Mammary epithelial cell (primary cell): ENCODE measurements at regions of chr16 and their contacts with region 1.

Region 1: DNA sequence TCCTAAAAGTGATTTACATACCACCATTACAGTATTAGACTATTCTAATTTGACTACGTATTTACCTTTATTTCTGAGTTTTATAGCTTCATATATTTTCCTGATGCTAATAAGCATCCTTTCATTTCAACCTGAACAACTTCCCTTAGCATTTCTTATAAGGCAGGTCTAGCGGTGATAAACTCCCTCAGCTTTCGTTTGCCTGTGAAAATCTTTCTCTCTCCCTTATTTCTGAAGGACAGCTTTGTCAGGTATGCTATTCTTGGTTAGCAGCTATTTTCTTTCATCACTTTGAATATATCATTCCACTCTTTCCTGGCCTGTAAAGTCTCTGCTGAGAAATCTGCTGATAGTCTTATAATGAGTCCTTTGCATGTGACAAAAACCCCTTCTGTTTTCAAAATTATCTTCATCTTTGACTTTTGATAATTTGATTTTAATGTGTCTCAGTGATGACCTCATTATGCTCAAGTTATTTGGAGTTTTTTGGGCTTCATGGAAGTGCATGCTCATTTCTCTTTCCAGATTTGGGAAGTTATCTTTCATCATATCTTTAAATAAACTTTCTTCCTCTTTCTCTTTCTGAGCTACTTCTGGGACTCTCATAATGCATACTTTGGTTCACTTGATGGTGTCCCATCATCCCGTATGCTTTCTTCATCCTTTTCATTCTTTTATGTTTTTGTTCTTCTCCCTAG is 285.4 kb upstream of the PMFBP1 start:
- DNase-seq: no peak
- H3K4me3 ChIP-seq: no peak overlapping the region
- H3K27ac ChIP-seq: no peak overlapping the region
- H3K4me1 ChIP-seq: no peaks in the 10 kb centered on the region
- H3K27me3 ChIP-seq: no peaks in the 10 kb centered on the region
- CTCF ChIP-seq: no peak

Region 2: DNA sequence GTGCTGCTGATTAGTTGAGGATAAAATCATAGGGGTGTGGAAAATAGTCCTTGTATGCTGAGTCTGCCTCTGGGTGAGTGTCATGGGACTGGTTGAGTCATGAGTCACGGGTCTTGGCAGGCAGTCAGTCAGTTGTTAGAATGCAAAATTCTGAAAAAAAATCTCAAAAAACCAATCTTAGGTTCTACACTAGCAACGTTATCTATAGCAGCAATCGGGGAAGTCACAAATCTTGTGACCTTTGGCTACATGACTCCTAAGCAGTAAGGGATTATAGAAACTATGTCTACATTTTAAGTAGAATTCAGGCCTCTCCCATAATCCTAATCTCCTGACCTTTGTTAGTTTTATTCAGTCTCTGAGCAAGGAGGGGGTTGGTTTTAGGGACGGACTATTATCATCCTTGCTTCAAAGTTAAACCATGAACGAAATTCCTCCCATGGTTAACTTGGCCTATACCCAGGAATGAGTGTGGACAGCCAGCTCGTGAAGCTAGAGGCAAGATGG is 267.5 kb before region 1 on chr16:
- CTCF ChIA-PET with region 1: interaction called, 16 read pairs
- dilution Hi-C with region 1: no loop called
- in situ Hi-C with region 1: no loop called
- intact Hi-C with region 1: no loop called
- DNase-seq: peak; percentile 57
- H3K4me3 ChIP-seq: no peak overlapping the region
- H3K27ac ChIP-seq: no peak overlapping the region
- H3K4me1 ChIP-seq: no peaks in the 10 kb centered on the region
- H3K27me3 ChIP-seq: no peaks in the 10 kb centered on the region
- CTCF ChIP-seq: no peak

Region 3: GRCh38 chr16:72517154-72517553 is 59.8 kb after region 1 on chr16:
- CTCF ChIA-PET with region 1: no interaction called
- dilution Hi-C with region 1: no loop called
- in situ Hi-C with region 1: no loop called
- intact Hi-C with region 1: no loop called
- DNase-seq: peak; percentile 51
- H3K4me3 ChIP-seq: no peak overlapping the region
- H3K27ac ChIP-seq: no peak overlapping the region
- H3K4me1 ChIP-seq: peaks cover 2% of the 10 kb centered on the region
- H3K27me3 ChIP-seq: no peaks in the 10 kb centered on the region
- CTCF ChIP-seq: no peak